Prostate gland (tissue), 2 donors: ENCODE measurements at regions of chr12 and their contacts with region 1.

Region 1: DNA sequence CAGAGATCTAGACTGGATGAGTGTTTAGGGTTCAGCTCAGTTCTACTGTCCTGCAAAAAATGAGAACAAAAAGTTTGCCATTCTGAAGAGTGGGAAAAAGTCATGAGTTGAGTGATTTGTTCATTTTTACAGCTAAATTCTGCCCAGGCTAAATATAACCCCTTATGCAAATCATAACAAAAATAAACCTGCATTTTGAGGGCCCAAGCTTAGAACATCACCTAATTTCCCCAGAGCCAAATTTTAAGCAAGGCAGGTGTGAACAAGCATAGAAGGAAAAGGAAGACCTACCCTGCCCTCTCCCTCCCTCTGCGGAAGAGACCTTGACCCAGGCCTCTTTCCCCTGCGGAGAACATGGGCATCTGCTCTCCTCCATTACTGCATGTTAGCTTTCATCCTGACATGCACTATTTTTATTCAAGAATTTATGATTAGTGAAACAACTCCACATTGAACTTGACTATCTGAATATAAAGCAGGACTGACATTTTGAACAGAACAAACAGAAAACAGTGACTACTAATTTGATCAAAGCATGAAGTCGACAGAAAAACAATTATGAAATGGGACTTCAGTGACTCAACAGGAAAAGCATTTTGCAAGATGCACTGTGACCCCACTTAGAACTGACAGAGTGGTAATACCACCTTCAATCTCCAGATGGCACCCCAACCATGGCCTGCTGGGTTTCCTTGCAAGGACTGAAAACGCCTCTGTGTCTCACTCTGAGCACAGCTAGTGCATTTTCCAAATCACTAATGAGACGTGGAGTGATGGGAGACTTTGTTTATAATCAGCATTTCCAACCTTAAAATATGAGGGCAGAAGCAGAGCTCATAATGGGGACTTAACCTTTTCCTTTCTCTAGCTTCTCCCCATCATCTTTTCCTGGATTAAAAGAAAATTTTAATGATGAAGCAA is 30.9 kb upstream of the SELPLG start:
- DNase-seq: peak; percentile 82
- H3K4me3 ChIP-seq: no peak overlapping the region
- H3K27ac ChIP-seq: peak overlapping the region; percentile 60 to 63
- H3K4me1 ChIP-seq: no peaks in the 10 kb centered on the region
- H3K27me3 ChIP-seq: no peaks in the 10 kb centered on the region
- CTCF ChIP-seq: peak; percentile 77 to 95 (median 93)
- POLR2A ChIP-seq: peak; percentile 20

Region 2: GRCh38 chr12:108516511-108517275 is 147.9 kb before region 1 on chr12:
- intact Hi-C with region 1: no loop called
- DNase-seq: no peak
- H3K4me3 ChIP-seq: no peak overlapping the region
- H3K27ac ChIP-seq: no peak overlapping the region
- H3K4me1 ChIP-seq: no peaks in the 10 kb centered on the region
- H3K27me3 ChIP-seq: no peaks in the 10 kb centered on the region
- CTCF ChIP-seq: no peak
- POLR2A ChIP-seq: no peak

Region 3: DNA sequence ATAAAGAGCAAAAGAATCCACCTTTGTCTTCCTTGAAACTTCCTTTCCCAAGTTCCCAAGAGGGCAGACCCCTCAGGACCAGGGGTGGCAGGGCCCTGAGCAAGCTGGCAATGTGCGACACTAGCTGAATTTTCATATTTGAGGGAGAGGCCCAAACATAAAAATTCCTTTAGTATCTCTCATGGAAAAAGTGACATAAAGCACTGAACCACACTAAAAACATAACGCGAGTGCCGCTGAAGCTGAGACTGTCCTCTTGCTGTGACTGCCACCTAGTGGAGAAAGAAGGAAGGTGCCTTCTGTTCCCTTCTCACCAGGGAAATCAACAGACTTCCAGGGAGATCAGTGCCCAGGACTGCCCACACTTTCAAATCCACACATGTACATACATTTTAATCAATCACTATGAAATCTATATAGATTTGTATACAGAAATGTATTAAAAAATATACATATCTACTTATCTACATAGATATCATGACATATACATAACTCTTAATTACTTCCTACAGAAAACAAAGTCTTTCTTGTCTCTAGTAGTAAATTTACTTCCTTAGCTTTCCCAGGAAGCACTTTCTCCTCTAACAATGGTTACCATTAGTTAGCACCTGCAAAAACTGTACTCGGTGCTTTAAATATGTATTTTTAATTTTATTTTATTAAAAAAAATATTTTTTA is 139.0 kb after region 1 on chr12:
- intact Hi-C with region 1: loop called (anchors 1 kb)
- DNase-seq: peak; percentile 84
- H3K4me3 ChIP-seq: no peak overlapping the region
- H3K27ac ChIP-seq: peak overlapping the region; percentile 67 to 71
- H3K4me1 ChIP-seq: no peaks in the 10 kb centered on the region
- H3K27me3 ChIP-seq: no peaks in the 10 kb centered on the region
- CTCF ChIP-seq: peak; percentile 85 to 96 (median 95)
- POLR2A ChIP-seq: no peak

Region 4: DNA sequence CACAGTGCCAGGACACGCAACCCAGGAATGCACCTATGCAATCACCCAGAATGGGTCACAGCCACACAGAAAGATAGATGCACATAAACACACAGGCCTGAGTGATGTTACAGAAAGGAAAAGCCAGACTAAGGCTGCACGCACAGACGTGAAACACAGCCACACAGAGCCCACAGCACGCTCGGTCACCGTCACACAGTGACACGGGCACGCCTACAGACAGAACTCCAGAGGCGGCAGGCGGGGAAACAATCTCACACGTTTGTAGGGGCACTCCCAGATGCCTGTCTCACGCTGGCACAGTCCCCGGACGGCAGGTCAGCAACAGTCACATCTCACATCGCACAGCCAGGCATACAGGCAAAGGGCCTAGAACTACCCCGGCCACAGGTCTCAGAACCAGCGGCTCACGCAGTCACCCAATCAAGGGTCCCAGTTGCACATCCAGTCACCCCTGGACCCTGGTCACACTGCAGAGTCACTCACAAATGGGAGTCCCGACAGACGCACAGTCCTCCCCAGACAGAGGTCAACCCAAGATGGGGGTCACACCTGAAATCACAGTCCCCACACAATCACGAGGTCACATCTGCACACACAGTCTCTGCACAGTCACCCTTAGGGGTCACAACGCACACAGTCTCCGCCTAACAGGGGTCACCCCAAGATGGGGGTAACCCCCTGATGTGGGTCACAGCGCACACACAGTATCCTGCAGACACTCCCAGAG is 192.0 kb after region 1 on chr12:
- intact Hi-C with region 1: loop called (anchors 5 kb)
- DNase-seq: peak; percentile 59
- H3K4me3 ChIP-seq: peak overlapping the region; percentile 58 to 61
- H3K27ac ChIP-seq: peak overlapping the region; percentile 68 to 82
- H3K4me1 ChIP-seq: peaks cover 10% of the 10 kb centered on the region
- H3K27me3 ChIP-seq: no peaks in the 10 kb centered on the region
- CTCF ChIP-seq: no peak
- POLR2A ChIP-seq: peak; percentile 40

Region 5: DNA sequence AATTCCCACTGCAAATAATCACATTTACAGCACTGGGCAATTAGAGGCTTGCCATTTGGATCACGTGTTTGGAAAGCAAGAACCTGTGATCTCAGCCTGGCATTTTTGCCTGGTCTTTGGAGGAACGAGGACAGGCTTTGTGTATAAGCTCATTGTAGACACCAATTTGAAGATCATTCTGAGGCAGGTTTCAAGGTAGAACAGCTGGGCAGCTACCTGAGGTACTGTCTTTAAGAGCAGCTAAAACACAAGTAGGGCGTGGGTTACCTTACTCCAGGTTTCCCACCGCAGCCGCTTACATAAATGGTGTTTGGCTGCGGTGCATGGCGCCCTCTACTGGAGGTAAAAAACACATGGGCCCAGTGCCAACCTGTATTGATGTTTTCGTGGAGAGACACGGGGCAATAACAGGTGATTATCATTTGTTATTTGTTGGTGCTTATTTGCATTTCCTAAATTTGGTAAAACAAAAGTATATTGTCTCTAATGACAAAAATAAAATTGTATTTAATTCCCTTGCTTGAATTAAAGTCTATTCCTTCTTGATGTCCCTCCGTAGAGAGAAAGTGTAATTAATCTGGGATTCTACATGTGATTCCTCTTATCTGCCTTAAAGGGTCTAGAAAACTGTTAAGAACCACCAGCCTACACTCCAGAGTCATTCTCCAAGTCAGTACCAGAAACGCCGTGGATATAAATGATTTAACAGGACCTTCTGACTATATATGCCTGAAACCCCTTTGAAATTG is 286.6 kb after region 1 on chr12:
- intact Hi-C with region 1: loop called (anchors 10 kb)
- DNase-seq: peak; percentile 68
- H3K4me3 ChIP-seq: no peak overlapping the region
- H3K27ac ChIP-seq: no peak overlapping the region
- H3K4me1 ChIP-seq: no peaks in the 10 kb centered on the region
- H3K27me3 ChIP-seq: no peaks in the 10 kb centered on the region
- CTCF ChIP-seq: peak; percentile 71 to 87 (median 82)
- POLR2A ChIP-seq: no peak